Posterior cingulate gyrus (tissue), 11 donors: ENCODE measurements at regions of chr11 and their contacts with region 1.

Region 1: GRCh38 chr11:124586238-124586860 is 16.6 kb downstream of the OR8A1 start:
- DNase-seq: peak in 9 of 10 donors; percentile 19 to 94 (median 62)

Region 2: DNA sequence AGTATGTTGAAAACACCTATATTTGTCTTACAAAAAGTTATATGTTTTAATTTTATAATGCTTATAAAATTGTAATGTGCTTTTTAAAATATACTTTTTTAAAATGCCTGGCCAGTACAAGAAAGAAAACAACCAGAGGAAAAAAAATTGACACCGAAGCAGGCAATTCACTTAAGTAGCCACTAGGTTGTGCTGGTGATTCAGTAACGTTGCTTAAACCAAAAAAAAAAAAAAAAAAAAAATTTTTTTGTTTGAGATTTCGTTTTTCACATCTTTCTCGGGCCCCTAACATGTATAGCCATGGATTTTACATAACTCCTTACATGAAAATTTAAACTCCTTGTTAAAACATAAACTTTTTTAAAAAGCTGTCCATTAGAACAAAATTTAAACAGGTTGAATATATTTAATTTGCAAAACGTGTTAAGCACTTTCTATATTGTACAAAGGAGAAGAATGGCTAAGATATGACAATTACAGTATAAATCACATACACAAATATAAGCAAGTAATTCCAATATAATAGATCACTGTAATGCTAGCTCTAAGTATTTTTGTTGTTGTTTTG is 170.9 kb before region 1 on chr11:
- intact Hi-C with region 1: loop called (anchors 2 kb)
- DNase-seq: no peak